Heart right ventricle (tissue), 16 donors: ENCODE measurements at regions of chr21 and their contacts with region 1.

Region 1: DNA sequence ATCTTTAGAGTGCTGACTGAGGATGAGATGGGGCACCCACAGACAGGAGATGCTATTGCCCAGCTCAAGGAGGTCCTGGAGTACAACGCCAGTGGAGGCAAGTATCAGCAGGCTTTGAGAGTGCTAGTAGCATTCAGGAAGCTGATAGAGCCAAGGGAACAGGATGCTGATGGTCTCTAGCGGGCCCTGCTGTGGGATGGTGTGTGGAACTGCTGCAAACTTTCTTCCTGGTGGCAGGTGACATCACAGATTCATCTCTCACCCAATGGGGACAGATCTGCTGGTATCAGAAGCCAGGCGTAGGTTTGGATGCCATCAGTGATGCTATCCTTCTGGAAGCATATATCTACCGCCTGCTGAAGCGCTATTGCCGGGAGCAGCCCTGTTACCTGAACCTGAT is 609.8 kb upstream of the NCAM2 start:
- DNase-seq: no peak
- ATAC-seq: no peak
- H3K4me3 ChIP-seq: no peak overlapping the region
- H3K27ac ChIP-seq: no peak overlapping the region
- H3K4me1 ChIP-seq: no peaks in the 10 kb centered on the region
- H3K27me3 ChIP-seq: no peaks in the 10 kb centered on the region
- CTCF ChIP-seq: no peak

Region 2: DNA sequence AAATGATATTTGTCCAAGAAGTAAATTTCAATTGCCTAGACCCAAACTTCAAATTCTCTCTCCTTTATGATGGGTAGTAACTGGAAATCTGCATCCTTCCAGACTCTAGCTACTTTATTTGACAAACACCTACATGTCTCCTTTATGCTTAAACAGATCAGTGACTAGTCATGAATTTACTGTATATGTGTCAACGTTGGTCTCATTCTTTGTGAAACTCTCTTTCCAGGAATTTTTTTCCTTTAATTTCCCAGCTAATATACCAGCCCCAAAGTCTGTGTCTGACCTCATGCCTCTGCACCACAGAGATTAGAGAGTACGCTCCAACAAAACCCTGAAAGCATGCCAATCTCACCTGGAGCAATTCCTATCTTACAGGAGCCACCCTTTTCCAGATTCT is 201.4 kb before region 1 on chr21:
- intact Hi-C with region 1: loop called in 1 of 10 experiments (anchors 5 kb)
- DNase-seq: no peak
- ATAC-seq: no peak
- H3K4me3 ChIP-seq: no peak overlapping the region
- H3K27ac ChIP-seq: no peak overlapping the region
- H3K4me1 ChIP-seq: no peaks in the 10 kb centered on the region
- H3K27me3 ChIP-seq: no peaks in the 10 kb centered on the region
- CTCF ChIP-seq: no peak